A549 (cell line): ENCODE measurements at regions of chr19 and their contacts with region 1.

Region 1: GRCh38 chr19:2032296-2032941 is 16.9 kb upstream of the BTBD2 start:
- DNase-seq: peak; percentile 59 to 88
- ATAC-seq: peak; percentile 86 to 88
- H3K4me3 ChIP-seq: peak overlapping the region; percentile 29
- H3K27ac ChIP-seq: peak overlapping the region; percentile 91 to 93
- H3K4me1 ChIP-seq: peaks cover 29% of the 10 kb centered on the region
- CTCF ChIP-seq: no peak
- EP300 ChIP-seq: no peak
- POLR2A ChIP-seq: peak; percentile 38; the same call in 1 of the 2 replicates
- RAD21 ChIP-seq: no peak

Region 2: GRCh38 chr19:246541-246940 is 1785.9 kb before region 1 on chr19:
- CTCF ChIA-PET with region 1: no interaction called
- POLR2A ChIA-PET with region 1: no interaction called
- DNase-seq: peak in 1 of 2 experiments; percentile 21
- ATAC-seq: no peak
- H3K4me3 ChIP-seq: no peak overlapping the region
- H3K27ac ChIP-seq: no peak overlapping the region
- H3K4me1 ChIP-seq: no peaks in the 10 kb centered on the region
- CTCF ChIP-seq: no peak
- EP300 ChIP-seq: no peak
- POLR2A ChIP-seq: no peak
- RAD21 ChIP-seq: no peak

Region 3: GRCh38 chr19:2016041-2016807 is 16.2 kb before region 1 on chr19:
- CTCF ChIA-PET with region 1: interaction called, 20 read pairs
- POLR2A ChIA-PET with region 1: no interaction called
- DNase-seq: peak; percentile 68 to 88
- ATAC-seq: peak; percentile 63 to 76
- H3K4me3 ChIP-seq: peak overlapping the region; percentile 26; the same call in 1 of the 3 replicates
- H3K27ac ChIP-seq: peak overlapping the region; percentile 88 to 100
- H3K4me1 ChIP-seq: peaks cover 13% of the 10 kb centered on the region
- CTCF ChIP-seq: no peak
- EP300 ChIP-seq: no peak
- POLR2A ChIP-seq: no peak
- RAD21 ChIP-seq: no peak

Region 4: GRCh38 chr19:2061495-2062381 is 29.3 kb after region 1 on chr19:
- CTCF ChIA-PET with region 1: interaction called, 3 read pairs
- POLR2A ChIA-PET with region 1: interaction called, 13 read pairs
- DNase-seq: peak; percentile 79 to 98
- ATAC-seq: peak; percentile 52 to 74
- H3K4me3 ChIP-seq: peak overlapping the region; percentile 51
- H3K27ac ChIP-seq: peak overlapping the region; percentile 99 to 100
- H3K4me1 ChIP-seq: peaks cover 47% of the 10 kb centered on the region
- CTCF ChIP-seq: no peak
- EP300 ChIP-seq: no peak
- POLR2A ChIP-seq: peak; percentile 44; the same call in 1 of the 2 replicates
- RAD21 ChIP-seq: no peak